ENCODE measurements at regions of chr7 and their contacts with region 1.

Region 1: DNA sequence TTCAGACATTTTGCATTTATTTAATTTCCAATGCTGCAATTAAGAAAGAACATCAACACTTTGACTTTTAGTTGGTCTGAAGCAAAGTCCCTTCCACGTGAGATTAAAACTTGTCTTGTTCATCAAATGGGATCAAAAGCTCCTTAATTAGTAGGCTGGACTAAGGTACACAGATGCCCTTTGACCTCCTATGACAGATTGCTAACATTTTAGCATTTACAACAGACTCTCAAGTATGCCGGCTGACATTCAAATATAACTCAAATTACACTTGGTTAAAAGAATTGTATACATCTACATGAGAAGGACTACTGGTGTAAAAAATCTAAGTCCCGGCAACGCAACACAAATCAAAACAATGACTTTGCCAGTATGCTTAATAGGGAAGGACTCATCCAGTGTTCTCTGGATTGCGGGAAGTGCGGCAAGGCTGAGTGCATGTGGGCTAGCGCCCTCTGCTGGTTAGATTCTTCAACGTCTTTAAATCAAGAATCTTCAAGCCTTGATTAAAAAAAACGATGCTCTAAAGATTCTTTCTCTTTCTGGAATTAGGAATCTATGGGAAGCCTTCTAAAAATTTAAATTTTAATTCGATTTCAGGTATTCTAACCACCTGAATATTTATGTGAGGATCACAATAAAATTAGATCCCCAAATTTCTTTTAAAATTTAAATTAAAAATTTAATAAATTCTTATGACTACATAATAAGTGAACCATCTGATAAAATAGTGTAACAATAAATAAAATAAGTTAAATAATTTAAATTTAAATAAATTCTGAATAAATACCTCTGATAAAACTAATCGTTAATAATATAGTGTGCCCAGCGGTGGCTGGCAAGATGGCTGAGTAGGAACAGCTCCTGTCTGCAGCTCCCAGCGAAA is 444.7 kb downstream of the DGKB start:
- DNase-seq: peak; percentile 61
- ATAC-seq: no peak
- H3K4me3 Mint-ChIP-seq: no peak overlapping the region
- H3K27ac Mint-ChIP-seq: no peak overlapping the region
- H3K4me1 Mint-ChIP-seq: no peaks in the 10 kb centered on the region
- H3K27me3 Mint-ChIP-seq: no peaks in the 10 kb centered on the region

Region 2: GRCh38 chr7:12638851-12639467 is 1818.9 kb before region 1 on chr7:
- CTCF ChIA-PET with region 1: no interaction called
- POLR2A ChIA-PET with region 1: no interaction called
- intact Hi-C with region 1: loop called in 1 of 2 experiments (anchors 5 kb)
- DNase-seq: no peak
- ATAC-seq: peak; percentile 50
- H3K4me3 Mint-ChIP-seq: no peak overlapping the region
- H3K27ac Mint-ChIP-seq: no peak overlapping the region
- H3K4me1 Mint-ChIP-seq: peaks cover 21% of the 10 kb centered on the region
- H3K27me3 Mint-ChIP-seq: no peaks in the 10 kb centered on the region

Region 3: DNA sequence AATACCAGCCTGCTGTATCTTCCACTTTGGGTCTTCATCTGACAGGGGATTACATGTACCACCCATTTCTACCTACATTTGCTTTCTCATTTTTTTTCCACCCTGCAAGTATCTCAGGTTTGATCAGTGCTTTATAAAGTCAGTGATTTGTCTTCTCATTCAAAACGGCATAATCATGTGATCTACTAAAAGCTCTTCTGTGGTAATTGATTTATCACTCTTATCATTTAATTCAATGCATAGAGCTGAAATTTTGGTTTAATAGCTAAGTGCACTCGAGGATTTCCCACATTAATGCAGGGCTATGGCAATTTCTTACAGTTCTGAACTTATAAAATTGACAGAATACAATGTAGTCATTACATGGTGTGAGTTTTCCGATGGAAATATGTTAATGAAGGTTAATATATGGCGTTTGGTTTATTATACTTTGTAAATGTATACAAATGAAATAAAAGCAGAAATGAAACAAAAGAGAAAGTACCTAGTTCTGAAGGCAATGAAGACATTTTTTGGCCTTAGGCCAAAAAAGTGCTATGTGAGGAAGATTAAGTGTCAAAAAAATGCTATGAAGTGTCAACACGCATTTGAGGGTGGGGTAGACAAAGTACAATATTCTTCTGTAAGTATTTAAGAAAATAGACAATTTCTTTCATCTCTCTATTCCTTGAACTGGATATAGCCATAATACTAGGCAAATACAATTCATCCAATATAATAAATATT is 925.6 kb before region 1 on chr7:
- CTCF ChIA-PET with region 1: no interaction called
- POLR2A ChIA-PET with region 1: no interaction called
- intact Hi-C with region 1: loop called in 1 of 2 experiments (anchors 5 kb)
- DNase-seq: no peak
- ATAC-seq: no peak
- H3K4me3 Mint-ChIP-seq: no peak overlapping the region
- H3K27ac Mint-ChIP-seq: no peak overlapping the region
- H3K4me1 Mint-ChIP-seq: no peaks in the 10 kb centered on the region
- H3K27me3 Mint-ChIP-seq: no peaks in the 10 kb centered on the region

Region 4: DNA sequence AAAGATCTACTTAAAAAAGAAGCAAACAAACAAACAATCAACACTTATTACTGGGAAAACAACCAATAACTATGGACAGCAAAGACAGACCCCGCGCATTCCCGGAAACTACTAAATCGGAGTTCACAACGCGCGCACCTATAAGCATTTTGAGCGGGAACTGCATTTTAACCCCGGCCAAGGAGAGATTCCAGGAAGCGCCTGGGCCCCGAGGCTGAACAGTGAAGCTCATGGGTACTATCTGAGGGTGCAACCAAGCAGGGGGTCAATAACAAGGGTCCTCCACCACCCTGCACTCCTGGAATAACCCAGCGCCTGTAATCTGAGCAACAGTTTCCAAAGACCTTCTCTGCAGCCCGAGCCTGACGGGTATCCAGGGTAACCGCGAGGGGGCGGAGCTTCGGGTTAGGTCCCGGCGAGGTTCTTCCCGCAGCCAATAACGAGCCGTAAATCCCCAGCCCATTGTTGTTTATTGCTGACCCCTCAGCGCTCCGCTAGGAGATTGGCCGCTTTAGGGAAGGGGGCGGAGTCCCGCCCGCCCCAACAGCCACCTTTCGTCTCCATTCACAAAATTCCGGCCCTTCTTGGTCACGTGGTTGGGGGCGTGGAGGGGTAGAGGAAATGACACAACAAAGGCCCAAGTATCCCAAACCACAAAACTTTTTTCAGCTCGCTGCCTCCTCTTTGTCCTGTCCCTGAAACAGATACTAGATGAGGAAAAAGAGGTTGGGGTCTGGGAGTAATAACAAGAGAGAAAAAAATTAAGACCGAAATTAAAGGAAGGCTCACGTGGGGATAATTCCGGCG is 466.6 kb before region 1 on chr7:
- CTCF ChIA-PET with region 1: no interaction called
- POLR2A ChIA-PET with region 1: no interaction called
- intact Hi-C with region 1: loop called in 1 of 2 experiments (anchors 5 kb)
- DNase-seq: peak; percentile 78
- ATAC-seq: peak; percentile 88
- H3K4me3 Mint-ChIP-seq: no peak overlapping the region
- H3K27ac Mint-ChIP-seq: no peak overlapping the region
- H3K4me1 Mint-ChIP-seq: no peaks in the 10 kb centered on the region
- H3K27me3 Mint-ChIP-seq: no peaks in the 10 kb centered on the region

Region 5: DNA sequence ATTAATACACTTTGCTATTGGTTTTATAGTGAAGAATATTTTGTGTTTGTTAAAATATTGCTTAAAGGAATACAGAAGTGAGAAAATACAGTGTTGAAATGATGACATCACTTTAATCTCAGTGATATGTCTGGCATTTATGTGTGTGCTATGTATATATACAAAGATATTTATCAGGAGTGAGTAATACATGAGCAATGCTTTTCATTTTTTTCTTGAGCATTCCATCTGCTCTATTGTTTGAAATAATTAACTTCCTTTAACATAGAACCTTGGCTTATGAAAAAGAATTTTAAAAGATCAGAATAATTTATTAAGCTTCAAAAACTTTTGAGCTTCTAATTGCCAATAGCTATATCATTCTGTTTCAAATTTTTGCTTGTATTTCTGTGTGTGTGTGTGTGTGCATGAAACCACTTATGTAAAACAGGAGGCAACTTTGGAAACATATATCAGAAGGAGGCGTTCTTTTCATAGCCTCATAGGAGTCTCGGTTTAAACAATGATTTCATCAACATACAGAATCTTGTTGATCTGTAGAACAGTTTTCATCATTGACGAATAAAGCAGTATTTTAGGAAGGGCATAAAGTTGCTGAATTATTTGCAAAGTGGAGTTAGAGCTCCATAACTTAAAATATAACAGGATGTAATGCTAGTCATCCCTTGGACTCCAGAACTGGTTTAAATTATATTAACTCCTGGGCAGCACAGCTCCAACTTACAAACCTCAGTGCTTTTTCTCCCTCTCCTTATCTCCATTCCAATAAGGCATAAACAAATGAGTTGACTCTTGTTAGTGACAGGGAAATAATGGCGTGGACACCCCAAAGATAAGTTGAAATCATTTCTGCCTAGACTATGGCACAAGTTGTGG is 673.1 kb after region 1 on chr7:
- CTCF ChIA-PET with region 1: no interaction called
- POLR2A ChIA-PET with region 1: no interaction called
- intact Hi-C with region 1: no loop called
- DNase-seq: no peak
- ATAC-seq: no peak
- H3K4me3 Mint-ChIP-seq: no peak overlapping the region
- H3K27ac Mint-ChIP-seq: no peak overlapping the region
- H3K4me1 Mint-ChIP-seq: no peaks in the 10 kb centered on the region
- H3K27me3 Mint-ChIP-seq: no peaks in the 10 kb centered on the region

Measured in activated CD4-positive, alpha-beta T cell treated with anti-CD3 and anti-CD28 coated beads for 36 hours (primary cell).